ENCODE measurements at regions of chr7 and their contacts with region 1.

Region 1: DNA sequence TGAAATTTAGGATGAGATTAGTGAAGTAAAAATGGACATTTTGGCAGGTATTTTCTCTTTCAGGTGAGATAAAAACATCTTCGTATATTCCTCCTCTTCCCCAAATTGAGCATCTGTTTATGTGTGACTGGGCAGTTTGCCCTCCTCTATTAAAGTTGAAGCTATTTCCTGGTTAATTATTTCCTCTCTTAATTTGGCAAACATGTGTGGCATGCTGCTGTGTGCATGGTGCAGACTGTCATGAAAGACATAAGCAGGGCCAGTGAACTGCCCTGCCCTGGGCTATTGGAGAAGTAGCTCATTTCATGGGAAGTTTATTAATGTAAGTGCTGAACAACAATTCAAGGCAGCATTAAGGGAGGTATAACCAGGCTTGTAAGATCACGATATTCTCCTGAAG is 52.6 kb downstream of the EVX1 start:
- DNase-seq: no peak
- ATAC-seq: no peak
- H3K4me3 ChIP-seq: no peak overlapping the region
- H3K27ac ChIP-seq: no peak overlapping the region
- H3K4me1 ChIP-seq: peaks cover 5% of the 10 kb centered on the region
- H3K27me3 ChIP-seq: no peaks in the 10 kb centered on the region
- CTCF ChIP-seq: no peak

Region 2: DNA sequence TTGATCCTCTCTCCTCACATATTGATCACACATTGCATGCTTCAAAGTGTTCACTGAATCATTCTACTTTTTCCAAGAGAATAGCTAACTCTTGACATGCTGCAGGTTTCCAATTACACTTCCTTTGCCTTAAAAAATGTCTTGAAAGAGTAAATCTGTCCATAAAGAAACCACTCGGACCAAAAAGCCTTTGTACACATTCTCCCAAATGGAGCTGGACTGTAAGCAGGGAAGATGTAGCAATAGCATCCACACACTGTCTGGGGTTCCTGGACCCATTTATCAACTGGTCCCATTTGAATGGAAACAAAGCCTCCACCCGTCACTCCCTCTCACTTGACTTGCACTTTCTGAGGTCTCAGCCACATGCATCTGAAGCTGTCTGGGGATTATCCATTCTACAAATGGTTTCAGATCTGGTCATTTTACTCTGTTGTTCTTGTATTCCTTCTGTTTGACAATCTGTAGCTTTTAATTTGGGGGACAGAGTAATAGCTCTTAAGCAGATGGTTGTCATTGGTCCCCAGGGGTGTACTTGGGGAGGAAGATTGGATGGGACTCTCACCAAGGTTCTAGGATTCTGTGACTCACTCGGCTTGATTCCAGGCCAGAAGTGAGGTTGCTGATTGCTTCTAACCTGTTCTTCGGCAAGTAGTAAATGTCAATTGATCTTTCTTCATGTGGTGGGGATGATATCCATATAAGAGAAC is 163.9 kb after region 1 on chr7:
- CTCF ChIA-PET with region 1: no interaction called
- POLR2A ChIA-PET with region 1: no interaction called
- intact Hi-C with region 1: loop called (anchors 5 kb)
- DNase-seq: peak; percentile 14
- ATAC-seq: no peak
- H3K4me3 ChIP-seq: no peak overlapping the region
- H3K27ac ChIP-seq: no peak overlapping the region
- H3K4me1 ChIP-seq: peaks cover 19% of the 10 kb centered on the region
- H3K27me3 ChIP-seq: no peaks in the 10 kb centered on the region
- CTCF ChIP-seq: no peak